ENCODE measurements at regions of chr22 and their contacts with region 1.

Region 1: GRCh38 chr22:44281768-44282637 is 30.7 kb downstream of the SHISAL1 start:
- DNase-seq: no peak
- ATAC-seq: no peak
- H3K4me3 ChIP-seq: no peak overlapping the region
- H3K27ac ChIP-seq: no peak overlapping the region
- H3K4me1 ChIP-seq: no peaks in the 10 kb centered on the region
- H3K27me3 ChIP-seq: no peaks in the 10 kb centered on the region
- CTCF ChIP-seq: no peak

Region 2: GRCh38 chr22:44133901-44134571 is 148.0 kb before region 1 on chr22:
- CTCF ChIA-PET with region 1: no interaction called
- POLR2A ChIA-PET with region 1: no interaction called
- intact Hi-C with region 1: no loop called
- DNase-seq: no peak
- ATAC-seq: no peak
- H3K4me3 ChIP-seq: no peak overlapping the region
- H3K27ac ChIP-seq: no peak overlapping the region
- H3K4me1 ChIP-seq: no peaks in the 10 kb centered on the region
- H3K27me3 ChIP-seq: no peaks in the 10 kb centered on the region
- CTCF ChIP-seq: no peak

Region 3: DNA sequence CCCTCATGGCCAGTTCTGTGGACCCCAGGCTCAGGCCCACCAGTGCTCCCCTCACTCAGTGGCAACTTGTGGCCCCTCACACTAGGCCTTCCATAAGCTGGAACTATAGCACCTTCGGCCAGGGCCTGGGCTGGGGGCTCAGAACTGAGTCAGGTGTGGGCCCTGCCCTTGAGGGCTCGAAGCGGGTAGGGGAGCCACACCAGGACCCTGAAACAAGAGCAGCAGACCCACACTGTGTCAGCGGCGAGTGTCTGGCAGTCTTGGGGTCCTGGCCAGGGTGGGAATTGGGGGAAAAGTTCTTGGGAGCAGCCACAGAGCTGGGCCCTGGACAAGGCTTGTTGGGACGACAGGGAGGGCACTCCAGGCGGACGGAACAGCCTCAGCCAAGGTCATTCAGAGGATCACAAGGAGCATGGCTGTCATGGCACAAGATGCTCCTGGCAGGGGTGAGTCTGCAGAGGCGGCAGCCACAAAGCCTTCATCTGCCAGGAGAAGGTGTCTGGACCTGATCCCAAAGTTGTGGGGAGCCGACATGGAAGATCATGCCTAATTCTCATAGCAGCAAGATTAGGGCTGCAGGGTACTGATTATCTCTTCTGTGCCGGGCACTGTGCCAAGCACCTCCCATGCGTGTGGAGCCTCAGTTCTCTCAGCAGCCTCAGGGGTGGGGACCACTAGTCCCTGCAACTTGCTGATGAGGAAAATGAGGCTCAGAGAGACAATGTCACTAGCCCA is 20.0 kb before region 1 on chr22:
- CTCF ChIA-PET with region 1: no interaction called
- POLR2A ChIA-PET with region 1: interaction called, 23 read pairs
- intact Hi-C with region 1: no loop called
- DNase-seq: no peak
- ATAC-seq: no peak
- H3K4me3 ChIP-seq: no peak overlapping the region
- H3K27ac ChIP-seq: no peak overlapping the region
- H3K4me1 ChIP-seq: no peaks in the 10 kb centered on the region
- H3K27me3 ChIP-seq: no peaks in the 10 kb centered on the region
- CTCF ChIP-seq: no peak

Region 4: GRCh38 chr22:44309137-44309536 is 27.1 kb after region 1 on chr22:
- CTCF ChIA-PET with region 1: no interaction called
- POLR2A ChIA-PET with region 1: no interaction called
- intact Hi-C with region 1: no loop called
- DNase-seq: peak; percentile 90
- ATAC-seq: peak; percentile 95
- H3K4me3 ChIP-seq: 0 out of 2 replicates have a peak overlapping the region, but pooled peaks have one; percentile 26
- H3K27ac ChIP-seq: peak overlapping the region; percentile 64
- H3K4me1 ChIP-seq: peaks cover 21% of the 10 kb centered on the region
- H3K27me3 ChIP-seq: no peaks in the 10 kb centered on the region
- CTCF ChIP-seq: no peak

Region 5: GRCh38 chr22:44595841-44596341 is 313.9 kb after region 1 on chr22:
- CTCF ChIA-PET with region 1: no interaction called
- POLR2A ChIA-PET with region 1: no interaction called
- intact Hi-C with region 1: no loop called
- DNase-seq: no peak
- ATAC-seq: no peak
- H3K4me3 ChIP-seq: no peak overlapping the region
- H3K27ac ChIP-seq: no peak overlapping the region
- H3K4me1 ChIP-seq: no peaks in the 10 kb centered on the region
- H3K27me3 ChIP-seq: peaks cover 11% of the 10 kb centered on the region; the same call in 1 of the 2 replicates
- CTCF ChIP-seq: no peak